ENCODE measurements at regions of chr16 and their contacts with region 1.

Region 1: DNA sequence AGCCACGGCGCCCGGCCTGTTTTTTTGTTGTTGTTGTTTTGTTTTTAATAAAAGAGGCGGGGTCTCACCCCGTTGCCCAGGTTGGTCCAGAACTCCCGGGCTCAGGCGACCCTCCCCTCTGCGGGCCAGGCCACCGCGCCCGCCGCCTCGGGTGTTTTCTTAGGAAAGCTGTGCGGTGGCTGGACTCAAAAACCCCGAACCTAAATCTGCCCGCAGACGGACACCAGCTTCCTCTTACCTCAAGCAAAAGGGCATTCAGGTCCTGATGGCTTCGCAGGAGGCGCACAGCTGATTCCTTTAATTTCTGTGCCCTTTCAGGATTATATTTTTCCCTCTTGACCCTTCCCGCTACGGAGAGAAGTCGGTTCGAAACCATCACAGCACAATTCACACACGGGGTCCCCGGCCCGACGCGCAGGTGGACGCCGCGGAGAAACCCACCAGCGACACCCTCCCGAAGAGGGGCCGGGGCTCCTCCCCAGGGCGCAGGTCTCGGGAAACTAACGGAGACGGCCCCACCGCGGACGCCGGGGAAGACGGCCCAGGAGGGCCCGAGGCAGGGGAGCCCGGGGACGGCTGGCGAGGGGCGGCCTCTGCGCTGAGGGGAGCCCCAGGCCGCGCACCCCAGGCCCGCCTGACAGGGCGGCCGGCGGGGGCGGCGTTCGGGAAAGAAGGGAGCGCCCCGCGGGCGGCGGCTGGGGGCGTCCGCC is 653 bp downstream of the FANCA start:
- DNase-seq: no peak
- ATAC-seq: no peak
- H3K4me3 Mint-ChIP-seq: peak overlapping the region; percentile 87
- H3K27ac Mint-ChIP-seq: peak overlapping the region; percentile 66
- H3K4me1 Mint-ChIP-seq: peaks cover 19% of the 10 kb centered on the region
- H3K27me3 Mint-ChIP-seq: no peaks in the 10 kb centered on the region
- CTCF ChIP-seq: no peak

Region 2: GRCh38 chr16:89657442-89658220 is 158.2 kb before region 1 on chr16 and contains the starts of genes CHMP1A and SPATA33:
- CTCF ChIA-PET with region 1: no interaction called
- POLR2A ChIA-PET with region 1: no interaction called
- intact Hi-C with region 1: loop called (anchors 5 kb)
- DNase-seq: peak; percentile 96
- ATAC-seq: peak; percentile 91
- H3K4me3 Mint-ChIP-seq: peak within 1 kb of the TSS; percentile 85
- H3K27ac Mint-ChIP-seq: peak within 1 kb of the TSS; percentile 75
- H3K4me1 Mint-ChIP-seq: peaks cover 33% of the 10 kb centered on the region
- H3K27me3 Mint-ChIP-seq: no peaks in the 10 kb centered on the region
- CTCF ChIP-seq: no peak
- total RNA-seq, gene CHMP1A: 89.8 and 98.7 TPM in 2 replicates
- total RNA-seq, gene SPATA33: 8.5 TPM in 2 replicates

Region 3: GRCh38 chr16:89720813-89721545 is 94.8 kb before region 1 on chr16 and contains the starts of genes VPS9D1 and ZNF276:
- CTCF ChIA-PET with region 1: no interaction called
- POLR2A ChIA-PET with region 1: interaction called, 3 read pairs
- intact Hi-C with region 1: loop called (anchors 5 kb)
- DNase-seq: peak; percentile 81
- ATAC-seq: peak; percentile 74
- H3K4me3 Mint-ChIP-seq: peak within 1 kb of the TSS; percentile 85
- H3K27ac Mint-ChIP-seq: peak within 1 kb of the TSS; percentile 85
- H3K4me1 Mint-ChIP-seq: peaks cover 35% of the 10 kb centered on the region
- H3K27me3 Mint-ChIP-seq: no peaks in the 10 kb centered on the region
- CTCF ChIP-seq: no peak
- total RNA-seq, gene VPS9D1: 6.6 and 7.4 TPM in 2 replicates
- total RNA-seq, gene ZNF276: 43.8 and 52.0 TPM in 2 replicates

Region 4: GRCh38 chr16:89764711-89765201 is 51.0 kb before region 1 on chr16:
- CTCF ChIA-PET with region 1: no interaction called
- POLR2A ChIA-PET with region 1: interaction called, 3 read pairs
- intact Hi-C with region 1: loop called (anchors 1 kb)
- DNase-seq: peak; percentile 62
- ATAC-seq: peak; percentile 83
- H3K4me3 Mint-ChIP-seq: peak overlapping the region; percentile 88
- H3K27ac Mint-ChIP-seq: peak overlapping the region; percentile 95
- H3K4me1 Mint-ChIP-seq: peaks cover 69% of the 10 kb centered on the region
- H3K27me3 Mint-ChIP-seq: no peaks in the 10 kb centered on the region
- CTCF ChIP-seq: no peak

Region 5: GRCh38 chr16:89828199-89828778 is 12.5 kb after region 1 on chr16 and contains the start of gene SPIRE2:
- CTCF ChIA-PET with region 1: no interaction called
- POLR2A ChIA-PET with region 1: interaction called, 3 read pairs
- intact Hi-C with region 1: loop called (anchors 1 kb)
- DNase-seq: peak; percentile 71
- ATAC-seq: peak; percentile 98
- H3K4me3 Mint-ChIP-seq: peak within 1 kb of the TSS; percentile 52
- H3K27ac Mint-ChIP-seq: no peak within 1 kb of the TSS
- H3K4me1 Mint-ChIP-seq: peaks cover 4% of the 10 kb centered on the region
- H3K27me3 Mint-ChIP-seq: peaks cover 26% of the 10 kb centered on the region
- CTCF ChIP-seq: no peak
- total RNA-seq, gene SPIRE2: 0.46 and 1.2 TPM in 2 replicates

Measured in activated B cell treated with CpG ODN at 0.5 μM for 24 hours (primary cell).